Activated naive CD4-positive, alpha-beta T cell treated with anti-CD3 and anti-CD28 coated beads for 36 hours (primary cell): ENCODE measurements at regions of chr20 and their contacts with region 1.

Region 1: GRCh38 chr20:53738039-53738944 is 144.7 kb upstream of the ZNF217 start:
- DNase-seq: no peak
- H3K4me3 Mint-ChIP-seq: no peak overlapping the region
- H3K27ac Mint-ChIP-seq: no peak overlapping the region
- H3K4me1 Mint-ChIP-seq: peaks cover 54% of the 10 kb centered on the region
- H3K27me3 Mint-ChIP-seq: no peaks in the 10 kb centered on the region

Region 2: GRCh38 chr20:53660078-53660909 is 78.0 kb before region 1 on chr20:
- CTCF ChIA-PET with region 1: interaction called, 6 read pairs
- intact Hi-C with region 1: loop called (anchors 2 kb)
- DNase-seq: peak; percentile 56
- H3K4me3 Mint-ChIP-seq: peak overlapping the region; percentile 77
- H3K27ac Mint-ChIP-seq: peak overlapping the region; percentile 88
- H3K4me1 Mint-ChIP-seq: peaks cover 61% of the 10 kb centered on the region
- H3K27me3 Mint-ChIP-seq: no peaks in the 10 kb centered on the region

Region 3: GRCh38 chr20:53692413-53693067 is 45.8 kb before region 1 on chr20:
- CTCF ChIA-PET with region 1: interaction called, 3 read pairs
- intact Hi-C with region 1: loop called (anchors 2 kb)
- DNase-seq: no peak
- H3K4me3 Mint-ChIP-seq: peak overlapping the region; percentile 17
- H3K27ac Mint-ChIP-seq: no peak overlapping the region
- H3K4me1 Mint-ChIP-seq: peaks cover 38% of the 10 kb centered on the region
- H3K27me3 Mint-ChIP-seq: no peaks in the 10 kb centered on the region

Region 4: DNA sequence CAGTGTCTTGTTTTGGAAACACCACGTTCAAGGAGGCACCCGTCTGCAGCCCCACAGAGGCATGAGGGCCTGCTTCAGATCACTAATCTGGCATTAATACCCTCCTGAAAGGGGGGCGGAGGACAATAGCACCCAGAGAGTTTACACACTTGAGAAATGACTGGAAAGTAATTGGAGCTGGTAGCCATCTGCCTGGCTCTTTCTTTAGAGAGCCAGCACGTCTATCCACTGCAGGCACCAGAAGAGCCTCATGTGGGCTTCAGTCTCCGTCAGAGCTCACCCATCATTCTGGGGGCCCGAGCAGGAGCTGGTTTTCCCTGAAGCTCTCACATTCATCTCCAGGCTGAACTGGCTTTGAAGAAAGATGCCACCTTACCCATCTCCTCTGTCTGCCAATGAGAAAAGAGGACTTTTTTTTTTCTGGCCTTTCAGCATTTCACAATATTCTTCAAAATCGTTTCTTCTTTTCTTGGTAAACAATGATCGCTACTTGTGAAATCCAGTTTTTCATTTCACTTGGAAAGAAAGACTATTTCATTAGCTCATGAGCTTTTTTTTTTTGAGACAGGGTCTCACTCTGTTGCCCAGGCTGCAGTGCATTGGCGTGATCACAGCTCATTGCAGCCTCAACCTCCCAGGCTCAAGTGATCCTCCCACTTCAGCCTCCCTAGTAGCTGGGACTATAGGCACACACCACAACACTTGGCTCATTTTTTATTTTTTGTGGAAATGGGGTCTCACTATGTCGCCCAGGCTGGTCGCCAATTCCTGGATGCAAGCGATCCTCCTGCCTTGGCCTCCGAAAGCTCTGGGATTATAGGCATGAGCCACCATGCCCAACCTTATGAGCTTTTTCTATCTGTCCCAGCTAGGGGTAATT is 19.9 kb before region 1 on chr20:
- CTCF ChIA-PET with region 1: no interaction called
- intact Hi-C with region 1: loop called (anchors 1 kb)
- DNase-seq: no peak
- H3K4me3 Mint-ChIP-seq: no peak overlapping the region
- H3K27ac Mint-ChIP-seq: no peak overlapping the region
- H3K4me1 Mint-ChIP-seq: peaks cover 17% of the 10 kb centered on the region
- H3K27me3 Mint-ChIP-seq: no peaks in the 10 kb centered on the region

Region 5: GRCh38 chr20:53779822-53780221 is 41.5 kb after region 1 on chr20:
- CTCF ChIA-PET with region 1: no interaction called
- intact Hi-C with region 1: no loop called
- DNase-seq: no peak
- H3K4me3 Mint-ChIP-seq: no peak overlapping the region
- H3K27ac Mint-ChIP-seq: no peak overlapping the region
- H3K4me1 Mint-ChIP-seq: no peaks in the 10 kb centered on the region
- H3K27me3 Mint-ChIP-seq: no peaks in the 10 kb centered on the region